Pancreas (tissue), 10 donors: ENCODE measurements at regions of chr21 and their contacts with region 1.

Region 1: GRCh38 chr21:24509131-24509530 is 1098.2 kb downstream of the MRPL39 start:
- DNase-seq: no peak
- ATAC-seq: no peak
- H3K4me3 ChIP-seq: no peak overlapping the region
- H3K27ac ChIP-seq: no peak overlapping the region
- H3K4me1 ChIP-seq: no peaks in the 10 kb centered on the region
- H3K27me3 ChIP-seq: peaks cover 0 to 7% (median 0%) of the 10 kb centered on the region in 4 donors
- CTCF ChIP-seq: no peak

Region 2: GRCh38 chr21:24428591-24429199 is 80.4 kb before region 1 on chr21:
- intact Hi-C with region 1: no loop called
- DNase-seq: no peak
- ATAC-seq: no peak
- H3K4me3 ChIP-seq: no peak overlapping the region
- H3K27ac ChIP-seq: no peak overlapping the region
- H3K4me1 ChIP-seq: no peaks in the 10 kb centered on the region
- H3K27me3 ChIP-seq: no peaks in the 10 kb centered on the region
- CTCF ChIP-seq: no peak

Region 3: DNA sequence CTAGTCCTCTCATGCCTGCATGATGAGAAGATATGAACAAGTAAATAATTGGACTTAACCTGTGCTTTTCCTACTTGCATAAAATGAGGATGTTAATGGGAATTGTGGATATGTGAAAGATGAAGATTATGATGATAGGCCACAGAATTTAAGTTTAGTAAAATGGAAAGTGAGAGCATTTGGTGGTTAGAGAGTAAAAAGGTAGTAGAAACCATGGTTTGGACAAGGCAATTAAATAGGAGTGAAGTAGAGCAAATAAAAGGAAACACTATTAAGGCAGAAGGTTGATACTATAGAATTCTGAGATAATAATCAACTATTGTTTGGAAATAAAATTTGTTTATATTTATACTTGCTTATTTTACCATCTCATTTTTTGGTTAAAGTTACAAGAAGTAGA is 64.4 kb before region 1 on chr21:
- intact Hi-C with region 1: loop called in 1 of 3 experiments (anchors 10 kb)
- DNase-seq: no peak
- ATAC-seq: no peak
- H3K4me3 ChIP-seq: no peak overlapping the region
- H3K27ac ChIP-seq: no peak overlapping the region
- H3K4me1 ChIP-seq: no peaks in the 10 kb centered on the region
- H3K27me3 ChIP-seq: no peaks in the 10 kb centered on the region
- CTCF ChIP-seq: no peak